Prostate gland (tissue), 2 donors: ENCODE measurements at regions of chr2 and their contacts with region 1.

Region 1: DNA sequence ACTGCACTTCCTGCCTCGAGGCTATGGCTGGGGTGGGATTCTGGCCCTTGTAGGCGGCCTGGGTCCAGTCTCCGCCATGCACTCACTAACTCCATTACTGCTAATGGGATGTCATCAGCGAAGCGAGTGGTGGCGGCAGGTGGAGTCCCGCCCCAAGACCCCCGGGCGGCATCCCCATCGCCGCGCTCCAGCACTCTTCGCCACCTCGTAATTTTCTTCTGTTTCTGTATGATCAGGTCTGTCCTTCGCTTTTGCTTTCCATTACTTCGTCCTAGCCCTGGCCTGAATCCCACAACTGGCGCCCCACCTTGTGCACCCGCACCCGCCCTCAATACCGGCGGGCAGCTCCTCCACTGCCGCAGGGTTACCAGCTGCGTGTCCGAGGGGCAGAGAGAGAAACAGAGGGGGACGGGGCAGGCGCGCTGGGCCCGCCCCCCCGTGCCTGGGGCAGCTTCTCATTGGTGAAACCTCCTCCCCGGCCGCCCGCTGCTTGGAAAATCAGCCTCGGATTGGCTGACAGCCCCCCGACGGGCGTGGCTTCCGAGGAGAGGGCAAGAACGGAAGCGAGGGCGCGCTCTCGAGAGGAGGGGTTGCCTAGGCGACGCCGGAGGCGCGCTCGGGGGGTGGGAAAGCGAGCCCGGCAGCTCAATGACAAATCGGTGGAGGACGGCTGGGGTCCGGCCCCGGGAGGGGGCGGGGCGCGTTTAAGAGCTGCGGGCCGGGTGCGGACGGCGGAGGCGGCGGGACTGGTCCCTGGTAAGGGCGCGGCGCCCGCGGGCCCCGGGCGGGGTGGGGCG is at the start of gene RALB:
- DNase-seq: peak; percentile 100
- H3K4me3 ChIP-seq: peak within 1 kb of the TSS; percentile 88 to 95
- H3K27ac ChIP-seq: peak within 1 kb of the TSS; percentile 87 to 94
- H3K4me1 ChIP-seq: peaks cover 4% of the 10 kb centered on the region
- H3K27me3 ChIP-seq: no peaks in the 10 kb centered on the region
- CTCF ChIP-seq: no peak
- POLR2A ChIP-seq: peak; percentile 83
- total RNA-seq, gene RALB: 92.6 to 132 TPM

Region 2: GRCh38 chr2:120223034-120223912 is 29.1 kb before region 1 on chr2 and contains the start of gene TMEM185B:
- intact Hi-C with region 1: loop called (anchors 2 kb)
- DNase-seq: peak; percentile 89
- H3K4me3 ChIP-seq: peak within 1 kb of the TSS; percentile 67 to 70
- H3K27ac ChIP-seq: peak within 1 kb of the TSS; percentile 92 to 93
- H3K4me1 ChIP-seq: peaks cover 5% of the 10 kb centered on the region
- H3K27me3 ChIP-seq: no peaks in the 10 kb centered on the region
- CTCF ChIP-seq: peak in 2 of 4 experiments; percentile 57 to 60
- POLR2A ChIP-seq: peak; percentile 29
- total RNA-seq, gene TMEM185B: 53.7 to 72.3 TPM

Region 3: DNA sequence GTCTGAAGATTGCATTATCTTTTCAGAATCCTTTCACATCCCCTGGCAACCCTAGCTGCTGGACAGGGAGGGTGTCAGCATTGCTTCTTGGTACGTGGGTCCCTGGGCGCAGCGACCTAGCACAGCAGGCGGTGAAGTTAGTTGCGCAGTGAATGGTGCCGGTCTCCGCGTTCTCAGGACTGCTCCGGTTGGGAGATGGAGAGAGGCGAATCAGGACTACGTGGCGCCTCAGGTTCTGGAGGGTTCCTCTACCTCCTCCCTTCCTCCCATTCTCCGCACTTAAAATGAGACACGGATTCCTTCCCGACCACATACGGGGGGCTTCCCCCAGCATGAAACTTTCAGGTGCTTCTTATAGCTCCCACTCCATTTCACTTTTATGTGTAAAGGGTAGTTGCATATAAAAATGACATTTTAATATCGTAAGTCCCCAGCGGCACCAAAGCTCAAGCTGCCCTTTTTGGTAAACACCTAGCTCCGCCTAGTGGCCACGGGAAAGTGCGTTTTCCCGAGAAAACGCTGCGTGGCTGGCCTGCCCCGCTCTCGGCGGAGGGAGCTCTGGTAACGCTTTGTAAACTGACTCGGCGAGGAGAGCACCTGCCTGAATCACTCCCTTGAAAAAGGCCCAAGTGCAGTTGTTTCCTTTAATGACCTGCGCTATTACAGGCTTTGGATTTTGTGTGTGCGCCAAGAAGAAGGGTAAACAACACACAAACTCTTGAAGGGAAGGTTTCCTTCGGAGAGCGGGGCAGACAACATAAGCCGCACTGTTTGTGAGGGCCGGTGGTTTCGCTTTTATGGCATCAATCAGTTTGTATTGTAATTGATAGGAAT is 60.7 kb after region 1 on chr2:
- intact Hi-C with region 1: loop called (anchors 5 kb)
- DNase-seq: peak; percentile 85
- H3K4me3 ChIP-seq: peak overlapping the region; percentile 21 to 31
- H3K27ac ChIP-seq: peak overlapping the region; percentile 59 to 72
- H3K4me1 ChIP-seq: no peaks in the 10 kb centered on the region
- H3K27me3 ChIP-seq: no peaks in the 10 kb centered on the region
- CTCF ChIP-seq: peak; percentile 87 to 93 (median 92)
- POLR2A ChIP-seq: no peak

Region 4: DNA sequence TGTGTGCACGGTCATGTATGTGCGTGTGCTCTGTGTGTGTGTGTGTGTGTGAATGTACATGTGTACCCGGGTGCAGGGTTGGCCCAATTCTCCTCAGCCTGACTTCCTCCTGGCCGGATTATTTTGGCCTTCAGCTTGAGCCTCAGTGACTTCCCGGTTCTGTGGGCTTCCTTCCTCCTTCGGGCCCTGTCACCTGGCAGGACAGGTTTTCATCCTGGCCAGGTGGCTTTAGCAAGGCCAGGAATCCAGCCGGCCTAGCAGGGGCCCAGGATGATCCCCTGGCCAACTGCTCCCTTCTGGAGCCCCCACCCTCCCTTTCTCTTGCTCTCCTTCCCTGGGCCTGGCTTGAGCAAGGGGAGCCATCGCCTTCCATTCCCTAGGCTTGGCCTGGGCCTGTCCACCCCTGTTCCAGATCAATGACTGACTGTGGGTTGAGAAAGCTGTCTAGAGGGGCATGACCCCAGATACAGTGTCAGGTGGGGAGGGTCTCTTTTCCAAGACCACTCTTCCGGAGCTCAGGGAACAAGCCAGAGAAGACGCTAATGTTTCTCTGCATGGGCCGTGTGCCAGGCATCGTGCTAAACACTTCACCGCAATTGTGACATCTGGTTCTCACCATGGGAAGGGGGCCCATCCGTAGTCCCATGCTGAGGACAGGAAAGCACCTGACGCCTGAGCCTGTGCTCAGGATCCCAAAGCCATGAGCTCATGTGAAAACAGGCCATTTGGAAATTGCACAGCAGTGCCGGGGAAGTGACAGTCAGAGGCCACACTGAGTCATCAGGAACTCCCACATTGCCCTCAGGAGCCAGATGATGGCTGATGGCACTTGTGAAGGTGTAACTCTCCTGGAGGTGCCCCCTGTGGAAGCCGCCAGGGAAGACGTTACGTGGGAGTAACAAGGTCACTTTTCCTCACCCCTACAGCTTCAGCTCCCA is 234.3 kb after region 1 on chr2:
- intact Hi-C with region 1: no loop called
- DNase-seq: no peak
- H3K4me3 ChIP-seq: no peak overlapping the region
- H3K27ac ChIP-seq: no peak overlapping the region
- H3K4me1 ChIP-seq: no peaks in the 10 kb centered on the region
- H3K27me3 ChIP-seq: no peaks in the 10 kb centered on the region
- CTCF ChIP-seq: no peak
- POLR2A ChIP-seq: no peak

Region 5: GRCh38 chr2:120680136-120680761 is 427.8 kb after region 1 on chr2:
- intact Hi-C with region 1: loop called (anchors 10 kb)
- DNase-seq: peak; percentile 89
- H3K4me3 ChIP-seq: no peak overlapping the region
- H3K27ac ChIP-seq: no peak overlapping the region
- H3K4me1 ChIP-seq: peaks cover 8% of the 10 kb centered on the region
- H3K27me3 ChIP-seq: no peaks in the 10 kb centered on the region
- CTCF ChIP-seq: peak; percentile 63 to 88 (median 78)
- POLR2A ChIP-seq: no peak